Activated naive CD4-positive, alpha-beta T cell treated with anti-CD3 and anti-CD28 coated beads, Interleukin-2, amount 10 ng/mL, durations not matched to agents 7 days and 5 days (primary cell): ENCODE measurements at regions of chr1 and their contacts with region 1.

Region 1: DNA sequence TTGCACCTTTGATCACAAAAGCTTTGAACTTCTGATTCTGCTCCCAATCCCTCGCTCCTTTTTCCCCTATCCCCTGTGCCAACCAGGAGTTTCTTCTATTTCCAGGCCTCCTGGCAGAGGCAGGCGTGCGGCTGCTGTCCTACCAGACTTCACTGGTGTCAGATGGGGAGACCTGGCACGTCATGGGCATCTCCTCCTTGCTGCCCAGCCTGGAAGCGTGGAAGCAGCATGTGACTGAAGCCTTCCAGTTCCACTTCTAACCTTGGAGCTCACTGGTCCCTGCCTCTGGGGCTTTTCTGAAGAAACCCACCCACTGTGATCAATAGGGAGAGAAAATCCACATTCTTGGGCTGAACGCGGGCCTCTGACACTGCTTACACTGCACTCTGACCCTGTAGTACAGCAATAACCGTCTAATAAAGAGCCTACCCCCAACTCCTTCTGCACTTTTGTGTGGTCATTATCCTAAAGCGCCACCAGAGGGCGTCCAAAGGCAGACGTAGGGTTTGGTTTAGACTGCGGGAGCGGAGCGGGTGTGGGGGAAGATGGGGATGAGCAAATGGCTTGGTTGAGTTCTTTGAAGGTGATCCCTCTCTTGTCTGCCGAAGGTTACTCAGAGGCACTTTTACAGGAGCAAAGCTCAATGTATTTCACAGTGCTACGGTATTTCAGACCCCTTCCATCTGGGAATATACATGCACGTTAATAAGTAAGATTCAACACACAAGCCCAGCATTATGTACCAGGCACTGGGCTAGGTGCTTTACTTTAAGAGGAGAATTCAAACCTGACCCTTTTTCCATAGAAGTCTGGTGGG is 24.7 kb downstream of the HMGCS2 start:
- DNase-seq: peak; percentile 66
- H3K4me3 Mint-ChIP-seq: no peak overlapping the region
- H3K27ac Mint-ChIP-seq: peak overlapping the region; percentile 19
- H3K4me1 Mint-ChIP-seq: peaks cover 7% of the 10 kb centered on the region
- H3K27me3 Mint-ChIP-seq: peaks cover 4% of the 10 kb centered on the region

Region 2: GRCh38 chr1:119711804-119712341 is 32.1 kb before region 1 on chr1 and contains the start of gene PHGDH:
- CTCF ChIA-PET with region 1: no interaction called
- DNase-seq: peak; percentile 81
- H3K4me3 Mint-ChIP-seq: peak within 1 kb of the TSS; percentile 84
- H3K27ac Mint-ChIP-seq: peak within 1 kb of the TSS; percentile 82
- H3K4me1 Mint-ChIP-seq: peaks cover 40% of the 10 kb centered on the region
- H3K27me3 Mint-ChIP-seq: peaks cover 35% of the 10 kb centered on the region

Region 3: GRCh38 chr1:119727996-119728395 is 16.0 kb before region 1 on chr1:
- CTCF ChIA-PET with region 1: interaction called, 13 read pairs
- DNase-seq: no peak
- H3K4me3 Mint-ChIP-seq: no peak overlapping the region
- H3K27ac Mint-ChIP-seq: no peak overlapping the region
- H3K4me1 Mint-ChIP-seq: peaks cover 4% of the 10 kb centered on the region
- H3K27me3 Mint-ChIP-seq: no peaks in the 10 kb centered on the region

Region 4: DNA sequence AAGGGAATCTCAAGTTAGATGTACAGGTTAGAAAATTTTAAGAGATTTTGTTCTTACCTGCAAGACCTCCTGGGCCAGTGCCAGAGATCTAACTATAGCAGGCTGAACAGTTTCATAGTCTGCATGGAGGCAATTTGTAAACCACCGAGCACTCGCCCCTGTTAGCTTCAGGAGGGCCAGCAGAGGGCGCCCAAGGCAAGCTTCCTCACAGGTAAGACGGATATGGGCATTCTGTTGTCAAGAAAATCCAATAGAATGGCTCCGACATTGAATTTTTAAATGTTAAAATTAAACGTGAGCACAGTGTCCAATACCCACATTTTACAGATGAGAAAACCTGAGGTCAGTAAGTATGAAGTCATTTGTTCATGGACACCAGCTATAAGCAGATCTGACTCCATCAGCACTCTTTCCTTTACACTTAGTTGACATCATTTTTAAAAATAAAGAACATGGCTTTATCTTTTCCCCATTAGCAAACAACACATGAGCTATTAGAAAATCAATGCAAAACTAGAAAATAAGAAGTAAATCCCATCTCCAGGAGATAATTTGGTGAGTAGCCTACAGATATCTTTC is 65.1 kb after region 1 on chr1:
- CTCF ChIA-PET with region 1: interaction called, 22 read pairs
- DNase-seq: peak; percentile 81
- H3K4me3 Mint-ChIP-seq: no peak overlapping the region
- H3K27ac Mint-ChIP-seq: no peak overlapping the region
- H3K4me1 Mint-ChIP-seq: peaks cover 4% of the 10 kb centered on the region
- H3K27me3 Mint-ChIP-seq: peaks cover 30% of the 10 kb centered on the region

Region 5: GRCh38 chr1:119870917-119871596 is 127.1 kb after region 1 on chr1:
- CTCF ChIA-PET with region 1: interaction called, 16 read pairs
- DNase-seq: peak; percentile 83
- H3K4me3 Mint-ChIP-seq: no peak overlapping the region
- H3K27ac Mint-ChIP-seq: no peak overlapping the region
- H3K4me1 Mint-ChIP-seq: peaks cover 8% of the 10 kb centered on the region
- H3K27me3 Mint-ChIP-seq: peaks cover 35% of the 10 kb centered on the region

Region 6: GRCh38 chr1:119968068-119968492 is 224.1 kb after region 1 on chr1:
- CTCF ChIA-PET with region 1: interaction called, 10 read pairs
- DNase-seq: peak; percentile 88
- H3K4me3 Mint-ChIP-seq: no peak overlapping the region
- H3K27ac Mint-ChIP-seq: peak overlapping the region; percentile 64
- H3K4me1 Mint-ChIP-seq: peaks cover 14% of the 10 kb centered on the region
- H3K27me3 Mint-ChIP-seq: no peaks in the 10 kb centered on the region